PC-9 (cell line): ENCODE measurements at regions of chr12 and their contacts with region 1.

Region 1: GRCh38 chr12:40336573-40337199 is 111.9 kb downstream of the LRRK2 start:
- DNase-seq: no peak
- H3K4me3 ChIP-seq: no peak overlapping the region
- H3K27ac ChIP-seq: no peak overlapping the region
- H3K4me1 ChIP-seq: no peaks in the 10 kb centered on the region
- H3K27me3 ChIP-seq: no peaks in the 10 kb centered on the region
- CTCF ChIP-seq: peak; percentile 74

Region 2: DNA sequence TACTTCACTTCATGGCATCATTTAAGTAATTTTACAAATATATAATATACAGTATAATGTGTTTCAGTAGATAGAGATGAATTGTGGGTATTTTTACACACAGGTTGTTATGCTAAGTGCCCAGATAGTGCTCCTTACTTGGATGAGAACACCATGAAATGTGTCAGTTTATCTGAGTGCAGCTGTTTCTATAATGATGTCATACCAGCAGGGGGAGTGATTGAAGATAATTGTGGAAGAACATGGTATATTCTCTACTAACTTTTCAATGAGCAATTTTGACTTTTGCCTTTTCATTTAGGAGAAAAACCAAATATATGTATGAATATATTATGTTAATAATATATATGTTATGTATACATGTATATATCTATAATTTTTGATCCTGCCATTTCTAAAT is 109.7 kb after region 1 on chr12:
- CTCF ChIA-PET with region 1: interaction called, 4 read pairs
- POLR2A ChIA-PET with region 1: no interaction called
- intact Hi-C with region 1: loop called (anchors 5 kb)
- DNase-seq: no peak
- H3K4me3 ChIP-seq: no peak overlapping the region
- H3K27ac ChIP-seq: no peak overlapping the region
- H3K4me1 ChIP-seq: no peaks in the 10 kb centered on the region
- H3K27me3 ChIP-seq: no peaks in the 10 kb centered on the region
- CTCF ChIP-seq: peak; percentile 62

Region 3: GRCh38 chr12:40622246-40622838 is 285.7 kb after region 1 on chr12:
- CTCF ChIA-PET with region 1: no interaction called
- POLR2A ChIA-PET with region 1: no interaction called
- intact Hi-C with region 1: loop called (anchors 5 kb)
- DNase-seq: peak in 1 of 2 experiments; percentile 30
- H3K4me3 ChIP-seq: no peak overlapping the region
- H3K27ac ChIP-seq: no peak overlapping the region
- H3K4me1 ChIP-seq: no peaks in the 10 kb centered on the region
- H3K27me3 ChIP-seq: no peaks in the 10 kb centered on the region
- CTCF ChIP-seq: peak; percentile 86

Region 4: GRCh38 chr12:40854604-40855003 is 517.9 kb after region 1 on chr12:
- CTCF ChIA-PET with region 1: no interaction called
- POLR2A ChIA-PET with region 1: no interaction called
- intact Hi-C with region 1: no loop called
- DNase-seq: no peak
- H3K4me3 ChIP-seq: no peak overlapping the region
- H3K27ac ChIP-seq: no peak overlapping the region
- H3K4me1 ChIP-seq: no peaks in the 10 kb centered on the region
- H3K27me3 ChIP-seq: no peaks in the 10 kb centered on the region
- CTCF ChIP-seq: no peak